ENCODE measurements at regions of chr13 and their contacts with region 1.

Region 1: DNA sequence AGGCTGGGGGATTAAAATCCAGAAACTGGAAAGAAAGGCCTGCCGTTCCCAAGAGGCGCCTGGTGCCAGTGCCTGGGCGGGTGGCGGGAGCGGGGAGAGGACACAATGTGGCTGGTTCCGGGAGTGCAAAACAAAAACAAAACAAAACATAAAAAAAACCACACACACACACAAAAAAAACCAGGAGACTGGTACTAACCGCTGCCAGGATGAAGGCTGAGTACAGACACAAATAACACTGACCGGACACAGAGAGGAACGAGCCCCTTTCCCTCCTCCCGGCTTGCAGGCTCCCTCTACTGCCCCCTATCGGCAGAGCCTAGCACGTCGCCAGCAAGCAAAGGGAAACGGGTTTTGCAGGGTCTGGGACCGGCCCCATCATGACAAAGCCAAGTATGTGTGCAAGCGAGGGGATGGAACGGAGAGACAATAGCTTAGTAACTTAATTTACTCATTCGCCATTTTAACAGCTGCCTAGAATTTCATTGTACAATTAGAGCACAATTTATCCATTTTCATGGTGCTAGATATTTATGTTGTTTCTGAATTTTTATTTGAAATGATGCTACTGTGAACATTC is 17.9 kb upstream of the ZDHHC20 start:
- DNase-seq: peak; percentile 82 to 91 (median 90)
- ATAC-seq: peak; percentile 82 to 89
- H3K4me3 ChIP-seq: peak overlapping the region; percentile 58
- H3K27ac ChIP-seq: no peak overlapping the region
- H3K4me1 ChIP-seq: no peaks in the 10 kb centered on the region
- H3K27me3 ChIP-seq: no peaks in the 10 kb centered on the region

Region 2: GRCh38 chr13:20940083-20940880 is 536.7 kb before region 1 on chr13:
- intact Hi-C with region 1: loop called in 3 of 4 experiments (anchors 5 to 10 kb)
- DNase-seq: no peak
- ATAC-seq: no peak
- H3K4me3 ChIP-seq: no peak overlapping the region
- H3K27ac ChIP-seq: no peak overlapping the region
- H3K4me1 ChIP-seq: no peaks in the 10 kb centered on the region
- H3K27me3 ChIP-seq: no peaks in the 10 kb centered on the region

Region 3: DNA sequence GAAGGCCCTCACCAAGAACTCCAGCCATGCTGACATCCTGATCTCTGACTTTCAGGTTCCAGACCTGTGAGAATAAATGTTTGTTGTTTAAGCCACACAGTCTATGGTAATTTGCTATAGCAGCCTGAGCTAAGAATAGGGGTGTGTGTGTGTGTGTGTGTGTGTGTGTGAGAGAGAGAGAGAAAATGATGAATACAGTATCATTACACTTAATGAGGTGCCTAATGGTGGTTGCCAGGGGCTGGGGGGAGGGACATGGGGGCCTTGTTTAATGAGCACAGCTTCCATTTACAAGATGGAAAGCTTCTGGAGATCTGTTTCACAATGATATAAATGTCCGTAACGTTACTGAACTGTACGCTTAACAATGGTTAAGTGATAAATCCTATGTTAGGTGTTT is 361.8 kb before region 1 on chr13:
- intact Hi-C with region 1: loop called in 2 of 4 experiments (anchors 5 to 10 kb)
- DNase-seq: no peak
- ATAC-seq: no peak
- H3K4me3 ChIP-seq: no peak overlapping the region
- H3K27ac ChIP-seq: no peak overlapping the region
- H3K4me1 ChIP-seq: no peaks in the 10 kb centered on the region
- H3K27me3 ChIP-seq: no peaks in the 10 kb centered on the region

Region 4: DNA sequence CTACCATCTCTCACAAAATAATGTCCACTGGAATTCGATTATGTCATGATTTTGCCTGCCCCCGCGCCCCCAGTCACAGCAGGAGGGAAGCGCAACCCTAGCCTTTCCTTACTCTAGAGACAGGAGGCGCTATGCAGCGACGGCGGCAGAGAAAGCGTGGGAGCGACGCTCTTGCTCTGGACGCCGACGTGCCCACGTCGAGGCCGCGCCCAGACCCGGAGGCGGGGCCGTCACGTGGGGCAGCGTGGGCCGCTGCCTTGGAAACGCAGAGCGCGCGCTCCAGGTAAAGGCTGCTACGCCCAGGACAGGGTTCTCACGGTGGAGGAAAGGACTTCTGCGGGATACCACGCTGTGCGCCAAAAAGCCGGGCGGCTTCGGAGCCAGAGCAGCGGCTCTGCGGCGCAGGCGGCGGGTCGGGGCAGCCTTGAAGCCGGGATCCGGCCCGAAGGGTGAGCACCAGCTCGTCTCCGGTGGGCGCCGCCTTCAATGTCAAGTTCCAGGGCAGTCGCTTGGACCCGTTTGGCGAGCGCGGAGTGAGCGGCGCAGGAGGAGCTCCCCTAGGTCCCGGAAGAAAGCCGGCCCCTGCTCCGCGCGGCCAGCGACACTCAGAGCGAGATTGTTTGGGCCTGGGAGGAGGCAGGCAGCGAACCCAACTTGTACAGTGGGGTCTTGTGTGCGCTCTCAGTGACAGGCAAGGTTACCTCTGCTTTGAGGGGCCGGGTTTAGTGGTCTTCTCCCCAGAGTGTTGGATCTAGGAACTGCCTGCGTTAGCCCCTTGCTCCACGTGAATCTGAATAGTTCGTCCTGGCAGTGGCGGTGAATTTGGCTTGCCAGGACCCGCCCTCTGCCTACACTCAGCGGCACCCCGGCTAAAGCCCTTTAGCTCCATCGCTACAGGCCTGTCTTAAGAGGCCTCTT is 178.8 kb before region 1 on chr13:
- intact Hi-C with region 1: loop called (anchors 2 to 10 kb)
- DNase-seq: peak; percentile 87 to 93 (median 93)
- ATAC-seq: peak; percentile 100
- H3K4me3 ChIP-seq: peak overlapping the region; percentile 72
- H3K27ac ChIP-seq: no peak overlapping the region
- H3K4me1 ChIP-seq: peaks cover 4% of the 10 kb centered on the region
- H3K27me3 ChIP-seq: no peaks in the 10 kb centered on the region

Region 5: GRCh38 chr13:21511849-21512248 is 34.9 kb after region 1 on chr13:
- intact Hi-C with region 1: no loop called
- DNase-seq: no peak
- ATAC-seq: no peak
- H3K4me3 ChIP-seq: no peak overlapping the region
- H3K27ac ChIP-seq: no peak overlapping the region
- H3K4me1 ChIP-seq: no peaks in the 10 kb centered on the region
- H3K27me3 ChIP-seq: no peaks in the 10 kb centered on the region

Measured in right cardiac atrium (tissue), 5 donors.